B cell (primary cell): ENCODE measurements at regions of chr18 and their contacts with region 1.

Region 1: GRCh38 chr18:3129053-3129864 is 90.5 kb downstream of the MYOM1 start:
- DNase-seq: peak; percentile 80
- ATAC-seq: peak; percentile 98
- H3K4me3 ChIP-seq: no peak overlapping the region
- H3K4me3 Mint-ChIP-seq: peak overlapping the region; percentile 4
- H3K27ac ChIP-seq: no peak overlapping the region
- H3K27ac Mint-ChIP-seq: no peak overlapping the region
- H3K4me1 ChIP-seq: peaks cover 0 to 4% of the 10 kb centered on the region in 2 donors
- H3K4me1 Mint-ChIP-seq: peaks cover 6% of the 10 kb centered on the region
- H3K27me3 ChIP-seq: no peaks in the 10 kb centered on the region
- H3K27me3 Mint-ChIP-seq: no peaks in the 10 kb centered on the region
- CTCF ChIP-seq: peak; percentile 89

Region 2: DNA sequence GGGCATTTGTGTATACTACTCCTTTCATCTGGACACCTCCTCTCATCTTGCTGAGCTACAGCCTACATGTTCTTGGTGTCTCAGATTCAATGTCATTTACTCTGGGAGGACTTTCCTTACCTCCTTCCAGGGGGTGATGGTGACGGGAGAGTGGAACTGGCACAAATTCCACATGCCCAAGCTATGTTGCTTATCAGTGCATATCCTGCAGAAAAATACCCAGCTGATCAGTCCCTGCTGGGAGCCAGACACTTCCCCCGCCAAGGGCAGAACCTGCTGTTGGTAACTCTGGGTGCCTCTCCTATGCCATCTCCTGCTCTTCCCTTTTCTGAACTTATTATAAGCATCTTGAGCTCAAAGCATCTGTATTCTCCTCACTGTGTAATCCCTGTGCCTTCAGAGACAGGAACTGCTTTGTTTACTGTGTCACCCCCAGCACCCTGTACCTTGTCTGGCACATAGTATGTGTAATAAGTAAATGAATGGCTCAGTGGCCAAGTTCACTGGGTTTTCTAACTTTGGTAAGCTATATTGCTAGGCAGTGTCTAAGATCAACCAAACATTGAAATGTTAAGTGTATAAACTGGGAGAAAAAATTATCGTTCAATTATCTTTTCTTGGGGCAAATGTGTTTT is 28.6 kb before region 1 on chr18:
- CTCF ChIA-PET with region 1: interaction called, 13 read pairs
- POLR2A ChIA-PET with region 1: no interaction called
- intact Hi-C with region 1: no loop called
- DNase-seq: no peak
- ATAC-seq: no peak
- H3K4me3 ChIP-seq: no peak overlapping the region
- H3K4me3 Mint-ChIP-seq: no peak overlapping the region
- H3K27ac ChIP-seq: no peak overlapping the region
- H3K27ac Mint-ChIP-seq: no peak overlapping the region
- H3K4me1 ChIP-seq: no peaks in the 10 kb centered on the region
- H3K4me1 Mint-ChIP-seq: no peaks in the 10 kb centered on the region
- H3K27me3 ChIP-seq: no peaks in the 10 kb centered on the region
- H3K27me3 Mint-ChIP-seq: no peaks in the 10 kb centered on the region
- CTCF ChIP-seq: no peak

Region 3: GRCh38 chr18:3209859-3210569 is 80.8 kb after region 1 on chr18:
- CTCF ChIA-PET with region 1: no interaction called
- POLR2A ChIA-PET with region 1: no interaction called
- intact Hi-C with region 1: no loop called
- DNase-seq: no peak
- ATAC-seq: no peak
- H3K4me3 ChIP-seq: no peak overlapping the region
- H3K4me3 Mint-ChIP-seq: no peak overlapping the region
- H3K27ac ChIP-seq: no peak overlapping the region
- H3K27ac Mint-ChIP-seq: no peak overlapping the region
- H3K4me1 ChIP-seq: no peaks in the 10 kb centered on the region
- H3K4me1 Mint-ChIP-seq: no peaks in the 10 kb centered on the region
- H3K27me3 ChIP-seq: no peaks in the 10 kb centered on the region
- H3K27me3 Mint-ChIP-seq: no peaks in the 10 kb centered on the region
- CTCF ChIP-seq: no peak

Region 4: DNA sequence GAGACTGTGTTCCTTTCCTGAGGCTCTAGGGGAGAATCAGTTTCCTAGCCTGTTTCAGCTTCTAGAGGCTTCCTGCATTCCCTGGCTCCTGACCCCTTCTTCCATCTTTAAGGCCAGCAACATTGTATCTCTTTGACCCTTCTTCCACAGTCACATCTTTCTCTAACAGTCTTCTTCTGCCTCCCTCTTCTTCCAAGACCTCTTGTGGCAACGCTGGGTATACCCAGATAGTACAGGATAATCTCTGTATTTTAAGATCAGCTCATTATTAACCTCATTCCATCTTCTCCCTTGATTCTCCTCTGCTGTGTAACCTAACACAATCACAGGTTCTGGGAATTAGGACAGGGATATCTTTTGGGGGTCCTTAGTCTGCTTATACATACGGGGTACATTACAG is 109.5 kb after region 1 on chr18:
- CTCF ChIA-PET with region 1: interaction called, 63 read pairs
- POLR2A ChIA-PET with region 1: interaction called, 11 read pairs
- intact Hi-C with region 1: no loop called
- DNase-seq: no peak
- ATAC-seq: no peak
- H3K4me3 ChIP-seq: no peak overlapping the region
- H3K4me3 Mint-ChIP-seq: no peak overlapping the region
- H3K27ac ChIP-seq: no peak overlapping the region
- H3K27ac Mint-ChIP-seq: peak overlapping the region; percentile 0
- H3K4me1 ChIP-seq: no peaks in the 10 kb centered on the region
- H3K4me1 Mint-ChIP-seq: peaks cover under 1% of the 10 kb centered on the region
- H3K27me3 ChIP-seq: no peaks in the 10 kb centered on the region
- H3K27me3 Mint-ChIP-seq: no peaks in the 10 kb centered on the region
- CTCF ChIP-seq: no peak

Region 5: DNA sequence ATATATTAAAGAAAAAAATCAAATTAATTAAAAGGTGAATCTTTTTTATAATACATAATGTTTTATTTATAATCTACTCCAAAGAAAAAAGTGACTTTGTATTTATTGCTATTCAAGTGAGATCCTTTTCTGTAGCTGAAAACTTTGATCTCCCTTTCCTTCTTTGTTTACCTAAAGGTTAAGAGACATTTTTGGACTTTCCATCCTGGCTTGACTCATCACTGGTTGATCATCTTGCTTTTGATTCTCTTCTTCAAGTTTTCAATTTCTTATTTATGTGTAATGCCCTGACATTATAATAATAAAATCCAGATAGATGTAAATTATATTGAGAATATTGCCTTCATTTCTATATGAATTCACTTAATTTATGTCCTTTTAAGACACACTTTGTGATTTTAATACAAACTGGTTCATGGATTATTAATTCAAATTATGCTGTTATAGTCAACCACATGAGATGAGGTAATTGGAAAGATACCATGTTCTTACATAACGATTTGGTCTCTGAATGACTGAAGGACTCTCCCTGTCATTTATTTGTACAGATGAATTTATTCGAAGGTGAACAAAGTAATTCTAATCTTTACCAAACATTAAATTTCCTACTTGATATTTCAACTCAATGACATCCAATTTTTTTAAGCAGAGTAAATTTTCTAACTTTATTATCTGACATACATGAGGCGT is 505.1 kb after region 1 on chr18:
- CTCF ChIA-PET with region 1: no interaction called
- POLR2A ChIA-PET with region 1: no interaction called
- intact Hi-C with region 1: no loop called
- DNase-seq: no peak
- ATAC-seq: no peak
- H3K4me3 ChIP-seq: no peak overlapping the region
- H3K4me3 Mint-ChIP-seq: no peak overlapping the region
- H3K27ac ChIP-seq: no peak overlapping the region
- H3K27ac Mint-ChIP-seq: no peak overlapping the region
- H3K4me1 ChIP-seq: no peaks in the 10 kb centered on the region
- H3K4me1 Mint-ChIP-seq: peaks cover 2% of the 10 kb centered on the region
- H3K27me3 ChIP-seq: no peaks in the 10 kb centered on the region
- H3K27me3 Mint-ChIP-seq: no peaks in the 10 kb centered on the region
- CTCF ChIP-seq: no peak